Transverse colon (tissue), 4 donors: ENCODE measurements at regions of chr12 and their contacts with region 1.

Region 1: DNA sequence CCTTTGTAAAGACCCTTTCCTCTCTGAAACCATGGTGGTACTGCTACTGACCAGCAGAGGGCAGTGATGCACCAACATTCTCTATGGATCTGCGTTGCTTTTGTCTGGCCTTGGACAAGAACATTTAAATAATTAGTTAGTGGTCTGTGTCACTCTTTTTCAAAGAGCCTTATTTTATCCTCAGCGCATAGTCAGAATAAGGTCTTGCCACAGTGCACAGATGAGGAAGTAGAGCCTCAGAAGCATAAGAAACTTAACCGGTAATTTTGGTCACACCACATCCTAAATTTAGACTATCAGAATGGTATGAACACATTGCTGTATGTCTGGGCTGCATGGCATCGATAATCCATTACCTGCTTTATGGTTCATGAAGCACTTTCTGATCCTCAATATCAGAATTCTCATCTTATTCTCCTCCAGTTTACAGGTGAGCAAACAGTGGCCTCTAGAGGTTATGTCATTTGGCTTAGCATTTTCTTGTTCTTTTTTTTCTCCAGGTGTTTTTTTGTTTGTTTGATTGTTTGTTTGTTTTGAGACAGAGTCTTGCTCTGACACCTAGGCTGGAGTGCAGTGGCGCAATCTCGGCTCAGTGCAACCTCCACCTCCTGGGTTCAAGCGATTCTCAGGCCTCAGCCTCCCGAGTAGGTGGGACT is 23.7 kb upstream of the IFT81 start:
- DNase-seq: peak; percentile 73
- H3K4me3 ChIP-seq: no peak overlapping the region
- H3K27ac ChIP-seq: peak overlapping the region; percentile 7 to 33 (median 18)
- H3K4me1 ChIP-seq: peaks cover 0 to 8% (median 0%) of the 10 kb centered on the region in 4 donors
- H3K27me3 ChIP-seq: no peaks in the 10 kb centered on the region
- CTCF ChIP-seq: peak; percentile 87 to 95 (median 89)
- EP300 ChIP-seq: no peak
- POLR2A ChIP-seq: no peak

Region 2: GRCh38 chr12:109981311-109981710 is 119.1 kb before region 1 on chr12:
- in situ Hi-C with region 1: no loop called
- intact Hi-C with region 1: no loop called
- DNase-seq: no peak
- H3K4me3 ChIP-seq: no peak overlapping the region
- H3K27ac ChIP-seq: no peak overlapping the region
- H3K4me1 ChIP-seq: peaks cover 0 to 3% (median 0%) of the 10 kb centered on the region in 4 donors
- H3K27me3 ChIP-seq: no peaks in the 10 kb centered on the region
- CTCF ChIP-seq: no peak
- EP300 ChIP-seq: no peak
- POLR2A ChIP-seq: no peak

Region 3: DNA sequence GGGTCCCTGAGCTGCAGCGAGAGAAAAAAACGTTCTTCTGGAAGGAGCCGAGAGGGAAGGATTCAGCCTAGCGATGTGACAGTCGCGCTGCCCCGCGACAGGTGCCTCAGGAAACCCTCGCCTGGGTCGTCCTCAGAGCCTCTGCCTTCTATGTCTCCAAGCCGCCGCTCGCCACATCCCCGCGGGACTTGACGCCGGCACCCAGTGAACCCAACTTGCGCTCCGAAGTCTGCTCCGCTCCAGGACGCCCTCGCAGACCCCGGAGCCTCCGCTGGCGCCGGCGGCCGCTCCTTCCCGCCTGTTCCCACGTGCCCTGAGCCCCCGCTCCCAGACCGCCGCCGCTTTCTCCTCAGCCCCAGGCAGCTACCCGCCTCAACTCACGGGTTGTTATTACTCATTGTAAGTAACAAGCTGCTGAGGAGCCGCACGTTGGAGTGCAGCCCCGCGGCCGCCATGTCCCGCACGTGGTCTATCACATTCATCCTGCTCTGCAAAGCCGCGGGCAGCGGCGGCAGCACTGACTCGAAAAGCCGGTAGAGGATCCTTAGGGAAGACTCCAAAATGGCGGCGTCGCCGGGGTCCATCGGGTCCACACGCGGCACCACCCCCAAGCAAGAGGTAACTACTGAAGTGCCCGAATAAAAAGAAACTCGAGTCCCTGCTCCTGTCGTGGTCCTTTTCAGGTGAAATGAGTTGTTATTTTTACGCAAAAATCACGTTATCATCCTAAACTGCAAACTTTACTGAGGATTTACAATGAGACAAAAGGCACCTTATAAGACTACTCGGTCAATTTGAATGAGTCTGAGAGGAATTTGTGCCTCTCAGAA is 302.9 kb after region 1 on chr12 and contains the start of gene ANAPC7:
- in situ Hi-C with region 1: no loop called
- intact Hi-C with region 1: no loop called
- DNase-seq: peak; percentile 92
- H3K4me3 ChIP-seq: peak within 1 kb of the TSS; percentile 54 to 96 (median 78)
- H3K27ac ChIP-seq: peak within 1 kb of the TSS; percentile 89 to 93 (median 92)
- H3K4me1 ChIP-seq: peaks cover 6 to 18% (median 12%) of the 10 kb centered on the region in 4 donors
- H3K27me3 ChIP-seq: no peaks in the 10 kb centered on the region
- CTCF ChIP-seq: peak in 2 of 5 experiments; percentile 2 to 43
- EP300 ChIP-seq: no peak
- POLR2A ChIP-seq: peak; percentile 46
- total RNA-seq, gene ANAPC7: 16.8 to 127 (median 31.4) TPM

Region 4: DNA sequence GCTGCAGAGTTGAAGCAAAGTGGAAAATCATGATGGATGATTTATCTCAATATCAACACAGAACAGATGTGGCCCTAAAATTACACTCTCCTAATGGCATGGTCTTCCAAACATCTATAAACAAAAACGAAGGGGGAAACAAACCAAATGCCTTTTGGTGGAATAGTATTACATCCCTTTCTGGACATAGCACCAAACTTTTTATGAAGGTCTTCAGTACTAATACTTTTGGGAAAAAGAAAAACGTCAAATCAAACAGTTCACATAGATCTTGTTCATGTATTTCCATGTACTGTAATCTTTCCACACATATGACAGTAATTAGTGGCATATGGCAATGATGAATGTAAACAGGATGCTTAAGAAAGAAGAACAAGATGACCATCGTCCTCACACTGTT is 326.0 kb after region 1 on chr12:
- in situ Hi-C with region 1: loop called (anchors 5 to 10 kb)
- intact Hi-C with region 1: loop called (anchors 2 kb)
- DNase-seq: no peak
- H3K4me3 ChIP-seq: no peak overlapping the region
- H3K27ac ChIP-seq: peak overlapping the region in 1 of 4 donors; percentile 0
- H3K4me1 ChIP-seq: peaks cover 0 to 8% (median 2%) of the 10 kb centered on the region in 4 donors
- H3K27me3 ChIP-seq: no peaks in the 10 kb centered on the region
- CTCF ChIP-seq: no peak
- EP300 ChIP-seq: no peak
- POLR2A ChIP-seq: no peak

Region 5: GRCh38 chr12:110431957-110432587 is 331.6 kb after region 1 on chr12:
- in situ Hi-C with region 1: loop called (anchors 5 to 10 kb)
- intact Hi-C with region 1: loop called (anchors 2 kb)
- DNase-seq: no peak
- H3K4me3 ChIP-seq: peak overlapping the region in 3 of 4 donors; percentile 32 to 69 (median 56)
- H3K27ac ChIP-seq: peak overlapping the region; percentile 55 to 77 (median 72)
- H3K4me1 ChIP-seq: peaks cover 0 to 4% (median 2%) of the 10 kb centered on the region in 4 donors
- H3K27me3 ChIP-seq: no peaks in the 10 kb centered on the region
- CTCF ChIP-seq: no peak
- EP300 ChIP-seq: no peak
- POLR2A ChIP-seq: no peak

Region 6: GRCh38 chr12:111250251-111250881 is 1149.9 kb after region 1 on chr12:
- in situ Hi-C with region 1: no loop called
- intact Hi-C with region 1: loop called (anchors 5 kb)
- DNase-seq: no peak
- H3K4me3 ChIP-seq: no peak overlapping the region
- H3K27ac ChIP-seq: no peak overlapping the region
- H3K4me1 ChIP-seq: no peaks in the 10 kb centered on the region
- H3K27me3 ChIP-seq: no peaks in the 10 kb centered on the region
- CTCF ChIP-seq: no peak
- EP300 ChIP-seq: no peak
- POLR2A ChIP-seq: no peak